ENCODE measurements at regions of chr20 and their contacts with region 1.

Region 1: DNA sequence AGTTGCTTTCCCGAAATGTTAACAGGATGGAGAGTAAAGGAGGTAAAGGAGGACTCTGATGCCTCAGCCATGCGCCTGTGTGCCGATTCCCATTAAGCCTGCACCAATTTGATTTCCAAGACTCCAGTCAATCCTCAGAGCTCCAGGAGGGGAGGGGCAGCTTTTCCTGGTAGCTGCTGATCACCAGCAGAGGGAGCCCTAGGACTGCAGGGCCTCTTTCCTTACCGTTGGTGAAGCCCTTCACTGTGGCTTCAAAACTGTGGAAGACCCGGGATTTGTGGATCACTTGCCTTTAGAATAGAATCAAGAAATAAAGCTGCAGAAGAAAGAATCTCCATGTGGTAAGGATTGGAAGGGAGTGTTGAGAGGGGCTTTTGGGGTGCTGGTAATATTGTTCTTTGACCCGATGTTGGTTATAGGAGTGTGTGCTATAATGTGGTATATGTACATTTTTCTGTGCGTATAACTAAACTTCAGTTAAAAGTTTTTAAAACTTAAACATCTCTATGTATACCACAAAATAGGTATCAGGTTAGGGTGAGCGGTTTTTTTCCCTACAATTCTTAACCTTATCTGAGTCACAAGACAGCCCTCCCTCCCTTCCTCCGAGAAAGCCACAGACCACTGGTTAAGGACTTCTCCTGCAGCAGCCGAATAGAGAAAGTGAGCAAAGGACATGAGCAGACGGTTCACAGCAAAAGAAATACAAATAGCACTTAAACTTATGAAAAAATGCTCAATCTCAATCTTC is 6.9 kb upstream of the OSER1 start:
- DNase-seq: no peak
- ATAC-seq: peak; percentile 90
- H3K4me3 ChIP-seq: no peak overlapping the region
- H3K27ac ChIP-seq: no peak overlapping the region
- H3K4me1 ChIP-seq: peaks cover 1% of the 10 kb centered on the region; the same call in 1 of the 2 replicates
- H3K27me3 ChIP-seq: no peaks in the 10 kb centered on the region
- CTCF ChIP-seq: peak; percentile 98

Region 2: GRCh38 chr20:42986143-42986773 is 1231.3 kb before region 1 on chr20:
- CTCF ChIA-PET with region 1: no interaction called
- POLR2A ChIA-PET with region 1: no interaction called
- in situ Hi-C with region 1: no loop called
- intact Hi-C with region 1: no loop called
- DNase-seq: no peak
- ATAC-seq: no peak
- H3K4me3 ChIP-seq: no peak overlapping the region
- H3K27ac ChIP-seq: no peak overlapping the region
- H3K4me1 ChIP-seq: no peaks in the 10 kb centered on the region
- H3K27me3 ChIP-seq: no peaks in the 10 kb centered on the region; the same call in 1 of the 2 replicates
- CTCF ChIP-seq: no peak

Region 3: GRCh38 chr20:44310664-44311639 is 93.4 kb after region 1 on chr20 and contains the start of gene FITM2:
- CTCF ChIA-PET with region 1: interaction called, 25 read pairs
- POLR2A ChIA-PET with region 1: interaction called, 12 read pairs
- in situ Hi-C with region 1: no loop called
- intact Hi-C with region 1: loop called (anchors 1 kb)
- DNase-seq: peak; percentile 78
- ATAC-seq: peak; percentile 99
- H3K4me3 ChIP-seq: peak within 1 kb of the TSS; percentile 85 to 96
- H3K27ac ChIP-seq: peak within 1 kb of the TSS; percentile 77
- H3K4me1 ChIP-seq: peaks cover 6% of the 10 kb centered on the region; the same call in 1 of the 2 replicates
- H3K27me3 ChIP-seq: no peaks in the 10 kb centered on the region
- CTCF ChIP-seq: peak; percentile 99
- total RNA-seq, gene FITM2: 10.5 TPM

Region 4: GRCh38 chr20:44388466-44389023 is 171.0 kb after region 1 on chr20:
- CTCF ChIA-PET with region 1: interaction called, 12 read pairs
- POLR2A ChIA-PET with region 1: no interaction called
- in situ Hi-C with region 1: no loop called
- intact Hi-C with region 1: loop called (anchors 1 kb)
- DNase-seq: peak; percentile 62
- ATAC-seq: peak; percentile 86
- H3K4me3 ChIP-seq: 0 out of 4 replicates have a peak overlapping the region, but pooled peaks of 1 of the 2 experiments have one; percentile 9
- H3K27ac ChIP-seq: no peak overlapping the region
- H3K4me1 ChIP-seq: peaks cover 10% of the 10 kb centered on the region; the same call in 1 of the 2 replicates
- H3K27me3 ChIP-seq: no peaks in the 10 kb centered on the region
- CTCF ChIP-seq: peak; percentile 92

Region 5: GRCh38 chr20:44460795-44461141 is 243.3 kb after region 1 on chr20:
- CTCF ChIA-PET with region 1: interaction called, 5 read pairs
- POLR2A ChIA-PET with region 1: no interaction called
- in situ Hi-C with region 1: no loop called
- intact Hi-C with region 1: loop called (anchors 5 kb)
- DNase-seq: no peak
- ATAC-seq: peak; percentile 78
- H3K4me3 ChIP-seq: no peak overlapping the region
- H3K27ac ChIP-seq: no peak overlapping the region
- H3K4me1 ChIP-seq: no peaks in the 10 kb centered on the region
- H3K27me3 ChIP-seq: no peaks in the 10 kb centered on the region
- CTCF ChIP-seq: peak; percentile 78; the same call in 1 of the 2 replicates